ENCODE measurements at regions of chr15 and their contacts with region 1.

Region 1: GRCh38 chr15:44663409-44664308 is at the start of gene SPG11:
- DNase-seq: peak; percentile 99
- H3K4me3 Mint-ChIP-seq: peak within 1 kb of the TSS; percentile 86
- H3K27ac Mint-ChIP-seq: peak within 1 kb of the TSS; percentile 98
- H3K4me1 Mint-ChIP-seq: peaks cover 57% of the 10 kb centered on the region
- H3K27me3 Mint-ChIP-seq: no peaks in the 10 kb centered on the region
- total RNA-seq, gene SPG11: 67.2 and 68.0 TPM in 2 replicates

Region 2: DNA sequence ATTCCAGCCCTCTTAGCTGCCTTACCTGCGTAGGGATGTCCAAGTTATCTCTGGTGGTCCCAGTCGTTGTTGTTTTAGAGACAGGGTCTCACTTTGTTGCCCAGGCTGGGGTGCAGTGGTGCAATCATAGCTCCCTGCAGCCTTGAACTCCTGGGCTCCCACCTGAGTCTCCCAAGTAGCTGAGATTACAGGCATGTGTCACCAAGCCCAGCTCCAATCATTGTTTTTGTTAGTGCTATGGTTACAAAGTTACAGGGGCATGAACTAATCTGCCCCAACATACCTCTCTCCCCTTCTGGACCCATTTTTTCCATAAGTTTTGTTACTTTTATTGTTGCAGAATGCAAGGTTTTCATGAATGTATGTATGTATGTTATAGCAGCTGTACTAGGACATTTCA is 181.6 kb before region 1 on chr15:
- intact Hi-C with region 1: no loop called
- DNase-seq: no peak
- H3K4me3 Mint-ChIP-seq: no peak overlapping the region
- H3K27ac Mint-ChIP-seq: no peak overlapping the region
- H3K4me1 Mint-ChIP-seq: peaks cover 2% of the 10 kb centered on the region
- H3K27me3 Mint-ChIP-seq: no peaks in the 10 kb centered on the region

Region 3: DNA sequence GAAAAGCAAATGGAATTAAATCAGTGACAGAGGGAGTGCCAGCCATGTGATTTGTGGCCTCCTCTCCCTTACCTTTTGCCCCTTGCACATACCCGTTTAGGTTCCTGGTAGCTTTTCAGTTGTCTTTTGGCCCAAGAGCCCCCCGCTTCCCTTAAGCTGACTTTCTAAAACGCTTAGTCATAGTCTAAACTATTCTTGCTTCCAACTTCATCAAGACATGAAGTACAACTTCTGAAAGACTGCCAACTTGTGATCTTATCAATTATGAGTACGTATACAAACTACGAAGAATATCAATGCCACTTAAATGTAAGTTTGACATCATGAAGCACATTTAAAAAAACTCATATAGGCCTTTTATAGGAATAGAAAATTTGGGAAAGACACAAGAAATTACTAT is 64.8 kb before region 1 on chr15:
- intact Hi-C with region 1: loop called (anchors 5 kb)
- DNase-seq: no peak
- H3K4me3 Mint-ChIP-seq: no peak overlapping the region
- H3K27ac Mint-ChIP-seq: peak overlapping the region; percentile 49
- H3K4me1 Mint-ChIP-seq: peaks cover 28% of the 10 kb centered on the region
- H3K27me3 Mint-ChIP-seq: no peaks in the 10 kb centered on the region

Region 4: DNA sequence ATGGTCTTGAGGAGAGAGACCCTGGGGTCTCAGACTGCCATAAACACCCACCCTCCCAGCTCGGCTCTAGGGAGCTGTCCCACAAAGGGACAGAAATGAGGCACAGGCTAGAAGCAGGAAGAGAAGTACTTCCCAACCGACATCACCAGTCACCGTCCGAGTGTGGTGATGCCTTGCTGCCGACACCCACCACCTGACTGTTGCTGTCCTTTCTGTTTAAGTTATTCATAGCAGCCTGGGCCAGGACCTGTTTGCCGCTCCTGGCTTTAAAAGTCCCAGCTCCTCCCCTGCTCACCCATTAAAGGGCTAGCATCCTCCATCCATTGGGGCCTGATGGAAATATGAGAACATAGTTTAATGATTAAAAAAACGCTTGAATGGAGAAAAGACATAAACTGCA is 13.0 kb after region 1 on chr15:
- intact Hi-C with region 1: loop called (anchors 1 kb)
- DNase-seq: peak; percentile 81
- H3K4me3 Mint-ChIP-seq: peak overlapping the region; percentile 75
- H3K27ac Mint-ChIP-seq: peak overlapping the region; percentile 86
- H3K4me1 Mint-ChIP-seq: peaks cover 64% of the 10 kb centered on the region
- H3K27me3 Mint-ChIP-seq: no peaks in the 10 kb centered on the region

Region 5: DNA sequence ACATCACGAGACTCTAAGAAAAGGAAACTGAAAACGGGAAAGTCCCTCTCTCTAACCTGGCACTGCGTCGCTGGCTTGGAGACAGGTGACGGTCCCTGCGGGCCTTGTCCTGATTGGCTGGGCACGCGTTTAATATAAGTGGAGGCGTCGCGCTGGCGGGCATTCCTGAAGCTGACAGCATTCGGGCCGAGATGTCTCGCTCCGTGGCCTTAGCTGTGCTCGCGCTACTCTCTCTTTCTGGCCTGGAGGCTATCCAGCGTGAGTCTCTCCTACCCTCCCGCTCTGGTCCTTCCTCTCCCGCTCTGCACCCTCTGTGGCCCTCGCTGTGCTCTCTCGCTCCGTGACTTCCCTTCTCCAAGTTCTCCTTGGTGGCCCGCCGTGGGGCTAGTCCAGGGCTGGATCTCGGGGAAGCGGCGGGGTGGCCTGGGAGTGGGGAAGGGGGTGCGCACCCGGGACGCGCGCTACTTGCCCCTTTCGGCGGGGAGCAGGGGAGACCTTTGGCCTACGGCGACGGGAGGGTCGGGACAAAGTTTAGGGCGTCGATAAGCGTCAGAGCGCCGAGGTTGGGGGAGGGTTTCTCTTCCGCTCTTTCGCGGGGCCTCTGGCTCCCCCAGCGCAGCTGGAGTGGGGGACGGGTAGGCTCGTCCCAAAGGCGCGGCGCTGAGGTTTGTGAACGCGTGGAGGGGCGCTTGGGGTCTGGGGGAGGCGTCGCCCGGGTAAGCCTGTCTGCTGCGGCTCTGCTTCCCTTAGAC is 47.9 kb after region 1 on chr15 and contains the start of gene B2M:
- intact Hi-C with region 1: loop called (anchors 1 kb)
- DNase-seq: peak; percentile 99
- H3K4me3 Mint-ChIP-seq: peak within 1 kb of the TSS; percentile 94
- H3K27ac Mint-ChIP-seq: peak within 1 kb of the TSS; percentile 100
- H3K4me1 Mint-ChIP-seq: peaks cover 44% of the 10 kb centered on the region
- H3K27me3 Mint-ChIP-seq: no peaks in the 10 kb centered on the region
- total RNA-seq, gene B2M: 4,380 and 4,481 TPM in 2 replicates

Region 6: DNA sequence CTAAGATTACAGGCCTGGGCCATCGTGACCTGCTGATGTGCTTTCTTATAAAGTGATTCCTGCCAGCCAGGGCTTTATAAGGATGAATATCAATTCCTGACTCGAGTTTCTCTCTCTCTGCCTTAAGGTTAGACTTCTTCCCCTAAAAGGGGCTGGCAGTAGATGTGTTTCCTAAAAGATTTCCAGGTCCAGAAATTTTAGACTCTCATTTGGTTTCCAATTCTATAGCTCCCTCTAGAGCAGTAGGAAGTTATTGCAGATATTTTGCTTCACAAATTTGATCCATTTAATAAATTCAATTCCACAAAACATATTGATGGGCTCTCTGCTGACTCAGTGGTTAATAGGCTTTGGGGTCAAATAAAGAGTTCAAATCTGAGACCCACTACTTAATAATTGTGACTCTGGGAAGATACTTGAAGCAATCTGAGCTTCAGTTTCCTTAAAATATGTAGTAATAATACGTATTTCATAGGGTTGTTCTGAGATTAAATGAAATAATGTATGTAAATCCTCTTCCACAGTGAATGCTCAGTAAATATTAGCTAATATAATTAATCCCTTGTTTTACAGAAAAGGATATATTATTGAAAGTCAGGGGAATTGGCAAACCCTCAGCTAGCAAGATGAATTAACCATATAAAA is 74.8 kb after region 1 on chr15:
- intact Hi-C with region 1: loop called (anchors 1 kb)
- DNase-seq: peak; percentile 71
- H3K4me3 Mint-ChIP-seq: peak overlapping the region; percentile 66
- H3K27ac Mint-ChIP-seq: peak overlapping the region; percentile 37
- H3K4me1 Mint-ChIP-seq: peaks cover 42% of the 10 kb centered on the region
- H3K27me3 Mint-ChIP-seq: no peaks in the 10 kb centered on the region